ENCODE measurements at regions of chr10 and their contacts with region 1.

Region 1: DNA sequence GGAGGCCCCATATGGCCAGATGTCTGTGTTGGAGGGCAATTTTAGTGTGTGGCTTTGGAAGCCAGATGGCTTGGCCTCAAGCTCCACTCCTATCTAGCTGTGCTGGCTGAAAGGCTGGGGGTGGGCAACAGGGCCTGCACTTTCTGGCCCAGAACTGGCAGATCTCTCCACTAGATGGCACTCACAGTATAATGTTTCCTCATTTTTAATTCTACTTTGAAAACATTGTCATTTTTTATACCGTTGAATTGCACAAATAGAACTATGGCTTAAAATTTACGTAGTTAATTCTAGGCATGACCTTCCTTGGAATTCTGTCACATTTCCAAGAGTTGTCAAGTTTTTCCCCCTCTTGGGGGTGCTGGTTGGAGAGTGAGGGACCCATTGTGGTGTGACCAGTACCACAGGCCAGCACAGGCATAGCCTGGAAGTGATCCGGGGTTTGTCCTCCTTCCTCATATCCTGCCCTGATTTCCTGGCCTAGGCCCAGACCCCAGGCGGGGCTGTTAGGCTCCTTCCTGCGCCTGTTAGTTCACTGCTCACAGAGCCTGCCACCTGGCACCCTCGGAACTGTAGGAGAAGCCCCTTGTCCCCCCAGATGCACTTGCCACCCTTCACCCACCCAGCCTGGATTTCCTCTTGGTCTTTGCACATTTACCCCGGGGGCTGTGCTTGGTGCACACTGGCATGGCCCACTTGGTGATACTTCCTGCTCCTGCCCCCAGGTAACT is 52.8 kb downstream of the ARHGAP22 start:
- DNase-seq: peak; percentile 54
- ATAC-seq: peak; percentile 62

Region 2: GRCh38 chr10:48400129-48400849 is 151.7 kb before region 1 on chr10:
- intact Hi-C with region 1: no loop called
- DNase-seq: no peak
- ATAC-seq: no peak

Region 3: DNA sequence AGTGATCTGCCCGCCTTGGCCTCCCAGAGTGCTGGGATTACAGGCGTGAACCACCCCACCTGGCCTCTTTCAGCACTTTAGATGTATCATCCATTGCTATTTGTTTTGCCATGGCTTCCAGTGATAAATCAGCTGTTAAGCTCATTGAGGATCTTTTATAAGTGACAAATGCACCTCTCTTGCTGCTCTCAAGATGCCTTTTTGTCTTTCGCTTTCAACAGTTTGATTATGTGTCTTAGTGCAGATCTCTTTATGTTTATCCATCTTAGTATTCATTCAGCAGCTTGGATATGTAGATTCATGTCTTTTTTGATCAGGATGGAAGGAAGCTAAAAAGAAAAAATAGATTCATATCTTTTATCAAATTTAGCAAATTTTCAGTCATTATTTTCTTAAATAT is 139.9 kb before region 1 on chr10:
- intact Hi-C with region 1: no loop called
- DNase-seq: no peak
- ATAC-seq: no peak

Region 4: GRCh38 chr10:48608279-48608681 is 56.3 kb after region 1 on chr10:
- intact Hi-C with region 1: loop called (anchors 10 kb)
- DNase-seq: no peak
- ATAC-seq: peak; percentile 43